IMR-90 (cell line): ENCODE measurements at regions of chr2 and their contacts with region 1.

Region 1: GRCh38 chr2:226478109-226478809 is 321.4 kb downstream of the IRS1 start:
- DNase-seq: peak; percentile 96
- ATAC-seq: peak; percentile 87
- H3K4me3 ChIP-seq: no peak overlapping the region
- H3K27ac ChIP-seq: peak overlapping the region; percentile 96
- H3K4me1 ChIP-seq: peaks cover 29% of the 10 kb centered on the region
- H3K27me3 ChIP-seq: no peaks in the 10 kb centered on the region
- CTCF ChIP-seq: no peak
- POLR2A ChIP-seq: no peak
- RAD21 ChIP-seq: peak; percentile 7

Region 2: GRCh38 chr2:224885836-224886547 is 1592.3 kb before region 1 on chr2:
- CTCF ChIA-PET with region 1: no interaction called
- POLR2A ChIA-PET with region 1: no interaction called
- dilution Hi-C with region 1: no loop called
- in situ Hi-C with region 1: no loop called
- intact Hi-C with region 1: no loop called
- DNase-seq: peak; percentile 93
- ATAC-seq: peak; percentile 63
- H3K4me3 ChIP-seq: no peak overlapping the region
- H3K27ac ChIP-seq: peak overlapping the region; percentile 81
- H3K4me1 ChIP-seq: peaks cover 25% of the 10 kb centered on the region
- H3K27me3 ChIP-seq: no peaks in the 10 kb centered on the region
- CTCF ChIP-seq: no peak
- POLR2A ChIP-seq: no peak
- RAD21 ChIP-seq: no peak

Region 3: DNA sequence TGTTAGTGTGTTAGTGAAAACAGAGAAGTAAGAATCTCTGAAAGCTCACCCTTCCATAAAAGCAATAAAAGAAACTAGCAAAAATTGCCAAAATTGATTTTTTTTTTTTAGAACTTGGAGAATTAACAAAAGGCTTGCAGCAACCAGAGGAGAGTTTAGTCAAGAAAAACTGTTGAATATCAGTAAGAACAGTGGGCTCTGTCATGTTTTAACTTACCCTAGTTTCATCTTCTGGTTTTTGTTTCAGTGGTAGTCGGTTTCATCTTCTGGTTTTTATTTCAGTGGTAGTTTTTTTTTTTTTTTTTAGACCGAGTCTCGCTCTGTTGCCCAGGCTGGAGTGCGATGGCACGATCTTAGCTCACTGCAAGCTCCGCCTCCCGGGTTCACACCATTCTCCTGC is 497.9 kb before region 1 on chr2:
- CTCF ChIA-PET with region 1: no interaction called
- POLR2A ChIA-PET with region 1: no interaction called
- dilution Hi-C with region 1: no loop called
- in situ Hi-C with region 1: no loop called
- intact Hi-C with region 1: no loop called
- DNase-seq: no peak
- ATAC-seq: no peak
- H3K4me3 ChIP-seq: no peak overlapping the region
- H3K27ac ChIP-seq: no peak overlapping the region
- H3K4me1 ChIP-seq: no peaks in the 10 kb centered on the region
- H3K27me3 ChIP-seq: no peaks in the 10 kb centered on the region
- CTCF ChIP-seq: no peak
- POLR2A ChIP-seq: no peak
- RAD21 ChIP-seq: no peak

Region 4: GRCh38 chr2:226118471-226119430 is 359.5 kb before region 1 on chr2:
- CTCF ChIA-PET with region 1: no interaction called
- POLR2A ChIA-PET with region 1: no interaction called
- dilution Hi-C with region 1: no loop called
- in situ Hi-C with region 1: no loop called
- intact Hi-C with region 1: loop called (anchors 5 kb)
- DNase-seq: peak; percentile 91
- ATAC-seq: peak; percentile 42
- H3K4me3 ChIP-seq: peak overlapping the region; percentile 6; the same call in 1 of the 2 replicates
- H3K27ac ChIP-seq: peak overlapping the region; percentile 92
- H3K4me1 ChIP-seq: peaks cover 8% of the 10 kb centered on the region
- H3K27me3 ChIP-seq: no peaks in the 10 kb centered on the region
- CTCF ChIP-seq: no peak
- POLR2A ChIP-seq: no peak
- RAD21 ChIP-seq: no peak; the same call in 1 of the 2 replicates

Region 5: GRCh38 chr2:226137201-226137811 is 341.0 kb before region 1 on chr2:
- CTCF ChIA-PET with region 1: no interaction called
- POLR2A ChIA-PET with region 1: interaction called, 10 read pairs
- dilution Hi-C with region 1: no loop called
- in situ Hi-C with region 1: no loop called
- intact Hi-C with region 1: no loop called
- DNase-seq: peak; percentile 76
- ATAC-seq: peak; percentile 77
- H3K4me3 ChIP-seq: no peak overlapping the region
- H3K27ac ChIP-seq: no peak overlapping the region
- H3K4me1 ChIP-seq: peaks cover 9% of the 10 kb centered on the region
- H3K27me3 ChIP-seq: no peaks in the 10 kb centered on the region
- CTCF ChIP-seq: no peak
- POLR2A ChIP-seq: no peak
- RAD21 ChIP-seq: no peak

Region 6: GRCh38 chr2:226215902-226216503 is 262.3 kb before region 1 on chr2:
- CTCF ChIA-PET with region 1: no interaction called
- POLR2A ChIA-PET with region 1: interaction called, 3 read pairs
- dilution Hi-C with region 1: no loop called
- in situ Hi-C with region 1: no loop called
- intact Hi-C with region 1: loop called (anchors 5 kb)
- DNase-seq: peak; percentile 54
- ATAC-seq: peak; percentile 64
- H3K4me3 ChIP-seq: no peak overlapping the region
- H3K27ac ChIP-seq: no peak overlapping the region
- H3K4me1 ChIP-seq: peaks cover 8% of the 10 kb centered on the region
- H3K27me3 ChIP-seq: no peaks in the 10 kb centered on the region
- CTCF ChIP-seq: peak; percentile 68
- POLR2A ChIP-seq: no peak
- RAD21 ChIP-seq: peak; percentile 74

Region 7: GRCh38 chr2:226447338-226448295 is 30.6 kb before region 1 on chr2:
- CTCF ChIA-PET with region 1: no interaction called
- POLR2A ChIA-PET with region 1: interaction called, 4 read pairs
- dilution Hi-C with region 1: no loop called
- in situ Hi-C with region 1: no loop called
- intact Hi-C with region 1: loop called (anchors 2 kb)
- DNase-seq: peak; percentile 52
- ATAC-seq: peak; percentile 24
- H3K4me3 ChIP-seq: no peak overlapping the region
- H3K27ac ChIP-seq: peak overlapping the region; percentile 50
- H3K4me1 ChIP-seq: peaks cover 7% of the 10 kb centered on the region
- H3K27me3 ChIP-seq: no peaks in the 10 kb centered on the region
- CTCF ChIP-seq: no peak
- POLR2A ChIP-seq: no peak
- RAD21 ChIP-seq: no peak

Region 8: DNA sequence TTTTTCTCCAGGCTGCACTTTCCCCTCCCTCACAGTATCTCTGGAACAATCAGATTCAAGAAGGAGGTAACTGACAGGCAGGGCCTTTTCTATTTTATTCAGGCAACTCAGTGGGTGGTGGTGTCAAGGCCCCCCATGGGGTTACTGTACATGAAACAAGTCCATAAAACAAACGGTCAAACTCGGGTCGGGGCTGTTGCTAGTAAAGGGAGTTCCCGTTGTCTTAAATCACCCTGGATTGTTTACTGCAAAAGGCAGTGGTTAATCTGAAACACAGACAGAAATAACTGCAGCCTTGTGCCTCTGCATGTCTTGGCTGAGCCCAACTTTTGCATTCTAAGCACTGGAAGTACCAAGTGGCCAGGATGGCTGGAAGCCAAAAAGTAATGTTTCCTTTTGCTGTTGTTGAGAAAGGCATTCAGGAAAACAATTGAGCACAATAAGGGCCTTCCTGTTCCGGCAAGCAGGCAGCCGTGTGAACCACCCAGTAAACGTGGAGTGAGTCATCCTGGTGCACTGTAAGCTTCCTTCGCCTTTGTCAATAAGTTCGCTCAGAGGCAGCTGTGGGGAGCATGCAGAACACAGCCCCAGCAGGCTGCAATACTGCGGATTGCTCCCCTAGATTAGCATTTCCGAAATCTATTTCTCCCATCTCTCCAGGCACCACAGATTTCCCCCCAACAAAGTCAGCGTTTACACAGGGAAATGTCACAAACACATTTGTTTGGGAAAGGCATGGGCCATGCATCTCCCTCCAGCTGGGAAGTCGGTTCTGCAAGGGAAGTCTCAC is 171.8 kb after region 1 on chr2:
- CTCF ChIA-PET with region 1: no interaction called
- POLR2A ChIA-PET with region 1: no interaction called
- dilution Hi-C with region 1: no loop called
- in situ Hi-C with region 1: no loop called
- intact Hi-C with region 1: loop called (anchors 5 kb)
- DNase-seq: peak; percentile 98
- ATAC-seq: peak; percentile 91
- H3K4me3 ChIP-seq: no peak overlapping the region
- H3K27ac ChIP-seq: peak overlapping the region; percentile 66
- H3K4me1 ChIP-seq: peaks cover 23% of the 10 kb centered on the region
- H3K27me3 ChIP-seq: no peaks in the 10 kb centered on the region
- CTCF ChIP-seq: no peak
- POLR2A ChIP-seq: peak; percentile 42; the same call in 1 of the 2 replicates
- RAD21 ChIP-seq: peak; percentile 16

Region 9: DNA sequence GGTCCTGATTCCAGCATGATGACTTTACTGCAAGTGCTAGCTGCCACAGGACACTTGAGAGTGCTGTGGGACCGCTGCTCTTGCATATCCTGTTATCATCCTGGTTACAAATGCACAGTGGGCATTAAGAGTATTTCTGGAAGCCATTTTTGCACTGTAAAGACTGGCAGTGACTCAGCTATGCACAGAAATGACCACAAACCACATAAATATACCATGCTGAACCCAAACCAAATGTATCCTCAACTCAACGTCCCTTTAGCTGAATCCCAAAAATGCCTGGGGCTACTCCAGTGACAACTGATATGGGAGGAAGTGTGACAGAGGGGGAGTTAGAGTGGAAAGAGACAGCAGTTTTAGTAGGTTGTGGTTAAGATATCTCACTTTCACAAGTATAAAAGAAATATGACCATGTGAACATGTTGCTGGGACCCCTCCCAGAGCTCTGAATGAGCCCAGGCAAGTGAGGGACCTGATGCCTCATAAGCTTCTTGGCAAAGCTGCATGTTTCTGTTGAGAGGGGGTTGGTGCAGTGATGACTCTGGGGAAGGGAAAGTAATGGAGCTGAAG is 394.9 kb after region 1 on chr2:
- CTCF ChIA-PET with region 1: no interaction called
- POLR2A ChIA-PET with region 1: interaction called, 12 read pairs
- dilution Hi-C with region 1: no loop called
- in situ Hi-C with region 1: no loop called
- intact Hi-C with region 1: no loop called
- DNase-seq: peak; percentile 59
- ATAC-seq: peak; percentile 71
- H3K4me3 ChIP-seq: no peak overlapping the region
- H3K27ac ChIP-seq: no peak overlapping the region
- H3K4me1 ChIP-seq: peaks cover under 1% of the 10 kb centered on the region; the same call in 1 of the 2 replicates
- H3K27me3 ChIP-seq: no peaks in the 10 kb centered on the region
- CTCF ChIP-seq: peak; percentile 22; the same call in 1 of the 2 replicates
- POLR2A ChIP-seq: no peak
- RAD21 ChIP-seq: peak; percentile 41